Activated B cell treated with CpG ODN at 0.5 μM for 24 hours (primary cell): ENCODE measurements at regions of chr1 and their contacts with region 1.

Region 1: GRCh38 chr1:201042779-201043461 is 19.4 kb upstream of the KIF21B start:
- DNase-seq: peak; percentile 47
- ATAC-seq: peak; percentile 93
- H3K4me3 Mint-ChIP-seq: no peak overlapping the region
- H3K27ac Mint-ChIP-seq: peak overlapping the region; percentile 35
- H3K4me1 Mint-ChIP-seq: peaks cover 2% of the 10 kb centered on the region
- H3K27me3 Mint-ChIP-seq: peaks cover 2% of the 10 kb centered on the region
- CTCF ChIP-seq: peak; percentile 70

Region 2: GRCh38 chr1:200802865-200803512 is 239.9 kb before region 1 on chr1:
- CTCF ChIA-PET with region 1: interaction called, 3 read pairs
- POLR2A ChIA-PET with region 1: no interaction called
- intact Hi-C with region 1: loop called (anchors 2 kb)
- DNase-seq: peak; percentile 26
- ATAC-seq: peak; percentile 81
- H3K4me3 Mint-ChIP-seq: no peak overlapping the region
- H3K27ac Mint-ChIP-seq: no peak overlapping the region
- H3K4me1 Mint-ChIP-seq: no peaks in the 10 kb centered on the region
- H3K27me3 Mint-ChIP-seq: peaks cover 10% of the 10 kb centered on the region
- CTCF ChIP-seq: peak; percentile 61

Region 3: DNA sequence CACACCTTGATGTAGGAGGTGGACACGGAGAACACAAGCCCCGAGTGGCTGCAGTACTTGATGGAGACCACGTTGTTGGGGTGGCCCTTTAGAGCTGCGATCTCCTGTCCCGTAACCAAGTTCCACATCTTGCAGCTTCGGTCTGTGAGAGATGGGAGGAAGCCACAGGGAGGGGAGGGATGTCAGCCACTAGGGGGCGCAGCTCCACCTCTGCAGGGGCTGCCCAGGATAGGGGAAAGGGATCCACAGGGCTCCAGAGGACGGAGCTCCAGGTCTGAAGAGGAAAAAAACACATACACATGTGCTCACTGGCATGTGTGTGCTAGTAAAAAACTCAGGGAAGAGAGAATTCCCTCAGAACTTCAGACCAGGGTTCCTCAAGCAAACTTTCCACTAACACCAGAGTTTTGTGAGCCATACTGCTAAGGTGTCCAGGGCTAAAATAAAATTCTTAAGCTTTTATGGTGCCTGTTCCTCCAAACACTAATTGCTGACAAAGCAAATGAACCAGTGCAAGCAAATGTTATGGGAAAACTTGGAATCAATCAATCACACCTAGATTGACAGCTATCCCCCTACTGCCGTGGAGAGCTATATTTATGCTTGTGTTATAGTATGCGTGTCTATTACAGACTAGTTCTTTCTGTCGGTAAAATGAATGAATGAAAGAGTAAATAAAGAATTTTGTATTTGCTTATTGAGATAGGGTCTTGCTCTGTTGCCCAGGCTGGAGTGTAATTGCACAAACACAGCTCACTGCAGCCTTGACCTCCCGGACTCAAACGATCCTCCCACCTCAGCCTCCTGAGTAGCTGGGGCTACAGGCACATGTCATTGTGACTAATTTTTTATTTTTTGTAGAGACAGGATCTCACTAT is 63.1 kb before region 1 on chr1:
- CTCF ChIA-PET with region 1: interaction called, 327 read pairs
- POLR2A ChIA-PET with region 1: no interaction called
- intact Hi-C with region 1: loop called (anchors 1 kb)
- DNase-seq: peak; percentile 53
- ATAC-seq: peak; percentile 73
- H3K4me3 Mint-ChIP-seq: no peak overlapping the region
- H3K27ac Mint-ChIP-seq: no peak overlapping the region
- H3K4me1 Mint-ChIP-seq: no peaks in the 10 kb centered on the region
- H3K27me3 Mint-ChIP-seq: no peaks in the 10 kb centered on the region
- CTCF ChIP-seq: no peak

Region 4: GRCh38 chr1:201114236-201115131 is 71.6 kb after region 1 on chr1:
- CTCF ChIA-PET with region 1: interaction called, 3 read pairs
- POLR2A ChIA-PET with region 1: no interaction called
- intact Hi-C with region 1: loop called (anchors 5 kb)
- DNase-seq: peak; percentile 61
- ATAC-seq: peak; percentile 88
- H3K4me3 Mint-ChIP-seq: peak overlapping the region; percentile 82
- H3K27ac Mint-ChIP-seq: no peak overlapping the region
- H3K4me1 Mint-ChIP-seq: peaks cover 2% of the 10 kb centered on the region
- H3K27me3 Mint-ChIP-seq: peaks cover 12% of the 10 kb centered on the region
- CTCF ChIP-seq: peak; percentile 18